ENCODE measurements at regions of chr6 and their contacts with region 1.

Region 1: DNA sequence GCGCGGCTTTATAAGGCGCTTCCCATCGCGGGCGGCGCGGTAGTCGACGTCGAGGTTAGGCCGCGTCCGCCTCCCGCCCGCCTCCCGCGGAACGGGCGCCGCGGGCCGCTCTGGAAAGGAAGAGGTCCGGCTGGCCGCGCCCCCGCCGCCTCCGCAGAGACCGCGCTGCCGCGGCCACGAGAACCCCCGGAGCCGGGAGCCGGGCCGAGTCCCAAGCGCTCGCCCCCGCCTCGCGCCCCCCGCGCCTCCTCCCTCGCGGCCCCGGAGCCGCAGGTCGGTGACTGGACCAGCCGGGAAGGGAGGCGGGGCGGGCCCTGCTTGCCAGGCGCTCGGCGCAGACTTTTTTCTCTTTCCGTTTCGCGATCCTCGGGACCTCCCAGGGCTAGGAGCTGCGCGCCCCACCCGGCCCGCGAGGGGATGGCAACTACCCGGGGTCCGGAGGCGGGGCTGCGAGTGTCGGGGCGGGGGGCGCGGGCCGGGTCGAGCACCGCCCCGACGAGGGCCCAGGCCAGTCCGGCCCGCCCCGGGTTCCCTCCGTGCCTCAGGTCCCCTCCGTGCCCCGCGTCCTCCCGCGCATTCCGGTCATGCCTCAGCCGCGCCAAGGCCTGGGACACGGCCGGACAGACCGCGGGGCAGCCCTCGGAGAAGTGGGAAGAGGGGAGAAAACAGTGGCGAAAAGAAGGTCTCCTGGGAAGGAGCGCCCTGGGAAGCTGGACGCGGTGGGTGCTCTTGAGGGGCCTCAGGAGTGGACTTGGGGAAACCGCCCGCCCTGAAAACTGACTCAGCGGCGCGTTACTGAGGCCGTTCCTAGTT is 423 bp upstream of the PXDC1 start:
- DNase-seq: peak; percentile 93
- ATAC-seq: peak; percentile 79
- H3K4me3 ChIP-seq: peak overlapping the region; percentile 99
- H3K27ac ChIP-seq: peak overlapping the region; percentile 86
- H3K4me1 ChIP-seq: peaks cover 21% of the 10 kb centered on the region
- H3K27me3 ChIP-seq: no peaks in the 10 kb centered on the region
- CTCF ChIP-seq: peak; percentile 42
- POLR2A ChIP-seq: peak; percentile 4; the same call in 1 of the 2 replicates
- RAD21 ChIP-seq: peak; percentile 40

Region 2: DNA sequence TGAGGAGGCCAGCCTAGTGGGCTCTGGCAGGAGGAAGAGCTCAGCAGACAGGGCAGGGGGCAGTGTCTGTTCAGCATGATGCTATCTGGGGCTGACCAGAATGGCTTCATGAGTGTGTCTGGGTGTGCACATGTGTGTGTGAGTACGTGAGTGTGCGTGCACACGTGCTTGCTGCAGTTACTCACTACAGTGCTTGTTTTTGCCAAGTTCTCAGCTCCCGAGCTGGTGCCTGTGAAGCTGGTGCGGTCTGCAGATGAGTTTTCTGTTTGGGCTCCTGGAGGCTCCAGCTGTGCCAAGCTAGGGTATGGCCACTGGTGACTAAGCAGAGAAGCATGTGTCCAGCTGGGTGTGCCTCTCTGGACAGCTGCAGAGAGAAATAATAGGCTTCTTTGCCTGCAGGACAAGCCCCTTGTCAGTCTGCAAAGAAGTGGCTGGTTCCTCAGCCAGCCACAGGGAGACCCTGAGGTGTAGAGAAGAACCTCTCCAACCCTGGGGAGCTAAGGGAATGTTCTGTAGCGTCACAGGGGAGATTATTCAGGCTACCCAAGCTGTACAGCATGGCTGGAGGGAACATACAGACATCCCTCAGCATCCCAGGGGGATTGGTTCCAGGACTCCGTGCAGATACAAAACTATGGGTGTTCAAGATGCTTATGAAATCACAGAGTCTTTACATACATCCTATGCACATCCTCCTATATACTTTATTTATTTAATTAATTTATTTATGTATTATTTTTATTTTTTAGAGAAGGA is 57.0 kb after region 1 on chr6:
- CTCF ChIA-PET with region 1: no interaction called
- POLR2A ChIA-PET with region 1: interaction called, 3 read pairs
- dilution Hi-C with region 1: no loop called
- in situ Hi-C with region 1: loop called (anchors 10 kb)
- intact Hi-C with region 1: loop called (anchors 2 kb)
- DNase-seq: peak; percentile 90
- ATAC-seq: peak; percentile 82
- H3K4me3 ChIP-seq: no peak overlapping the region
- H3K27ac ChIP-seq: peak overlapping the region; percentile 63
- H3K4me1 ChIP-seq: peaks cover 27% of the 10 kb centered on the region
- H3K27me3 ChIP-seq: no peaks in the 10 kb centered on the region
- CTCF ChIP-seq: peak; percentile 21; the same call in 1 of the 2 replicates
- POLR2A ChIP-seq: no peak
- RAD21 ChIP-seq: no peak

Region 3: DNA sequence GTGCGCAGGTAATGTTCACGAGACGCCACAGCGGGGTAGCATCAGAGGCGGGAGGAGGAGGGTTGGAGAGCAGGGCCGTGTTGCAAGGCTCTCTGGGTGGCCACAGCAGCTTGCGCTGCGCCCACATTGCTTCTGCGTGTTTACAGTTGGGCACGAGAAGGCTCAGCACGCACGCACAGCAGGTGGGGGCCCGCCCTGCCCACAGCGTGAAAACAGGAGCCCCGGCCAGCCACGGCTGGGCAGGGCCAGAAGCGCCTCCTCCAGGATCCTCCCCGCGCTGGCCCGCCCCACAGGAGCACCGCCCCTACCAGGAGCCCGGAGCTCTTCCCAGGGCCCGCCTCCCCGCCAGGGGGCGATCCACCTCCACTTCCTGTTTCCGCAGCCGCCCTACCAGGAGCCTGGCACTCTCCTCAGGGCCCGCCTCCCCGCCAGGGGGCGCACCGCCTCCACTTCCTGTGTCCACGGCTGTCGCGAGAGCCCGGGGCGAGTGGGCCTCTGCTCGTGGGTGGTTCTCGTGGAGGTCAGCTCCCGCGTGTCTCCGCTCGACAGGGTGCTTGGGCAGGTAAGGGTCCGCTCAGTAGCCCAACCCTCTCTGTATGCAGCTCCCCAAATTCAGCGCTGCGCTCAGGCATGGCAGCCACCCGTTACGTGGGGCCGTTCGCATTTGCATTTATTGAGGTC is 97.1 kb after region 1 on chr6 and contains the start of gene FAM50B:
- CTCF ChIA-PET with region 1: interaction called, 7 read pairs
- POLR2A ChIA-PET with region 1: no interaction called
- dilution Hi-C with region 1: no loop called
- in situ Hi-C with region 1: loop called (anchors 5 kb)
- intact Hi-C with region 1: loop called (anchors 1 kb)
- DNase-seq: peak; percentile 80
- ATAC-seq: peak; percentile 96
- H3K4me3 ChIP-seq: peak within 1 kb of the TSS; percentile 65
- H3K27ac ChIP-seq: peak within 1 kb of the TSS; percentile 69
- H3K4me1 ChIP-seq: peaks cover 8% of the 10 kb centered on the region; the same call in 1 of the 2 replicates
- H3K27me3 ChIP-seq: no peaks in the 10 kb centered on the region
- CTCF ChIP-seq: peak; percentile 99
- POLR2A ChIP-seq: no peak
- RAD21 ChIP-seq: peak; percentile 86
- total RNA-seq, gene FAM50B: 3.9 and 4.1 TPM in 2 replicates

Region 4: DNA sequence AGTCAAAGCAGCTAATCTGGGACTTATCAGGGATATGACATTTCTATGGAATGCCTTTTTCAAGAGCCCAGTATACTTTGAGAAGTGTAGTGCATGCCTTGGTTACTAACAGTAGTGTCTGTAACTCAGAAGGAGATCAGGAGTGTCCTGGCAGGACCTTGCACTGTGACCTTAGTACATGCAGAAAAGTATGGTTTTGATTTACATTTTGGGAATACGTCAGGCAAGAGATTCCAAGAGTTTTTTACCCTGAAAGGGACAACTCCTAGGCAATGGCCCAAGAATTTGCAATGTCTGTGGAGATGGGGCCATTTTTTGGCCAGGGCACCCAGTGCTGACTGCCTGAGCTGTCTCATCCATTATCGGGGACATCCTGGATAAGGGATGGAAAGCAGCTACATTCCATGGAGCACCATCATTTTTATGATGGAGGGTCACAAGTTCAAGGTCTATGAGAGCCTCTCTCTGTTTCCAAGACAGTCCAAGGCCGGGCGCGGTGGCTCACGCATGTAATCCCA is 177.4 kb after region 1 on chr6:
- CTCF ChIA-PET with region 1: no interaction called
- POLR2A ChIA-PET with region 1: no interaction called
- dilution Hi-C with region 1: no loop called
- in situ Hi-C with region 1: no loop called
- intact Hi-C with region 1: loop called (anchors 2 kb)
- DNase-seq: peak; percentile 77
- ATAC-seq: peak; percentile 83
- H3K4me3 ChIP-seq: no peak overlapping the region
- H3K27ac ChIP-seq: peak overlapping the region; percentile 56; the same call in 1 of the 2 replicates
- H3K4me1 ChIP-seq: peaks cover 14% of the 10 kb centered on the region
- H3K27me3 ChIP-seq: no peaks in the 10 kb centered on the region
- CTCF ChIP-seq: no peak
- POLR2A ChIP-seq: no peak
- RAD21 ChIP-seq: no peak

Region 5: DNA sequence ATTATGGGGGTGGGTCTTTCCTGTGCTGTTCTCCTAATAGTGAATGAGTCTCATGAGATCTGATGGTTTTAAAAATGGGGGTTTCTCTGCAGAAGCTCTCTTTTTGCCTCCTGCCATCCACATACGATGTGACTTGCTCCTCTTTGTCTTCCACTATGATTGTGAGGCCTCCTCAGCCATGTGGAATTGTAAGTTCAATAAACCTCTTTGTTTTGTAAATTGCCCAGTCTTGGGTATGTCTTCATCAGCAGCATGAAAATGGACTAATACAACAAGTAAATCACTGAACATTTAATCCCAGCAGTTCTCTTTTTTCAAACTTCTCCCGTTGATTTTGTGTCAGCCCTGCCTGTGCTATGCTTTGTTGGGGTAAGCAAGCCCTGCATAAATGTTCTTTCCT is 231.8 kb after region 1 on chr6:
- CTCF ChIA-PET with region 1: interaction called, 7 read pairs
- POLR2A ChIA-PET with region 1: no interaction called
- dilution Hi-C with region 1: no loop called
- in situ Hi-C with region 1: loop called (anchors 5 kb)
- intact Hi-C with region 1: loop called (anchors 1 kb)
- DNase-seq: no peak
- ATAC-seq: no peak
- H3K4me3 ChIP-seq: no peak overlapping the region
- H3K27ac ChIP-seq: no peak overlapping the region
- H3K4me1 ChIP-seq: peaks cover 5% of the 10 kb centered on the region
- H3K27me3 ChIP-seq: no peaks in the 10 kb centered on the region
- CTCF ChIP-seq: no peak
- POLR2A ChIP-seq: no peak
- RAD21 ChIP-seq: no peak

Measured in IMR-90 (cell line).